ENCODE measurements at regions of chr6 and their contacts with region 1.

Region 1: DNA sequence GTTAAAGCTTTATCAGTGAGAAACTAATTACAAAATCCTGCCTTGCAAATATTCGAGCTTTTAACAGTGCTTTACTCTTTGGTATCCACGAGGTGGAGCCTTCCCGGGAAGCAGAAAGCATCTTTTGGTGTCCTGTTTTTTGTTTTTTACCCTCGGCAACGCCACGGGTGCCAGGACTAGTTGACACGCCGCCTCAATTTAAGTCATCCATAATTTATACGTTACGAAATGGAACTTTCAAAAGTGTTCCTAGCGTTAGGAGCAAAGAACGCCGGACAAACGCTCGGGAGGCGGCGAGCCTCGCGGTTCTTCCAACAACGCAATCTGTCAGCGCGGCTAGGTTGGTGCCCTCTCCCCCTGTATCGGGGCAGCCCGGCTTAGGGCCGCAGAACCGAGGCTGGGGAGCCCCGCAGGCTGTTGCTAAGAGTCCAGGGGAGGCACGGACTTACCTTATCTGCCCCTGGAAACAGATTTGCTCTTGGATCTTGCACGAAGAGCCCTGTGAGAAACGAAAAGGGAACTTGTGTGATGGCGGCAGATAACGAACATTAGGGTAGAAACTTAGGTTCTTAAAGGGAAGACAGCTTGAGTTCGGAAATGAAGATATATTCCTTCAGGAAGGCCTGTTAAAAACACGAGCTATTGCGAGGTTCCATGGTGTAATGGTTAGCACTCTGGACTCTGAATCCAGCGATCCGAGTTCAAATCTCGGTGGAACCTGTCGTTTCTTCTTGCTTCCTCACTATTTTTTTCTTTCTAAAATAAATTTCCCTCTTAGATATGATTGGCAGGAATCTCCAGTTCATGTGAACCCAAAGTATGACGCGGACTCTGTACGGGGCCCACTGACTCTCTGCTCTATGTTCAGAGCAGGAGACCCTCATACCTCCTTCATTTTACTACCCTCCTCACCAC is 46.2 kb upstream of the ZNF184 start:
- DNase-seq: peak; percentile 40
- H3K4me3 Mint-ChIP-seq: peak overlapping the region; percentile 89
- H3K27ac Mint-ChIP-seq: peak overlapping the region; percentile 86
- H3K4me1 Mint-ChIP-seq: peaks cover 16% of the 10 kb centered on the region
- H3K27me3 Mint-ChIP-seq: peaks cover 25% of the 10 kb centered on the region

Region 2: DNA sequence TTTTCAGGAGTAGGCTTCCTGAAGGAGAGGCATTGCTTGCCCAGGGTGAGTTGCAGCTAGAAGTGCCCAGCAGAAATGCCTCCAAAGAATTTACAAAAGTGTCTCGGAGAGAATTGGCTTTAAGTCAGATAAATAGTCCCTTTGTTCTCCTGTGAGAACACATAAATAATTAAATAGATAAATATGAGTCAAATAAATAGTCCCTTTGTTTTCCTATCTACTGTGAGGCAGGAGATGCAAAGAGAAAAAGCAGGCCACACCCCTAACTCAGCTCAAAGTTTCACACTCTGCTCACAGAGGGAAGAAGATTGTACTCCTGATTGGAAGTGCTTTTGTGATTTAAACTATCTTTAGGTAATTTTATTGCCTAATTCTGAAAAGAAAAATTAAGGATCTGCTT is 452.3 kb before region 1 on chr6:
- intact Hi-C with region 1: no loop called
- DNase-seq: no peak
- H3K4me3 Mint-ChIP-seq: no peak overlapping the region
- H3K27ac Mint-ChIP-seq: no peak overlapping the region
- H3K4me1 Mint-ChIP-seq: no peaks in the 10 kb centered on the region
- H3K27me3 Mint-ChIP-seq: peaks cover 9% of the 10 kb centered on the region

Region 3: DNA sequence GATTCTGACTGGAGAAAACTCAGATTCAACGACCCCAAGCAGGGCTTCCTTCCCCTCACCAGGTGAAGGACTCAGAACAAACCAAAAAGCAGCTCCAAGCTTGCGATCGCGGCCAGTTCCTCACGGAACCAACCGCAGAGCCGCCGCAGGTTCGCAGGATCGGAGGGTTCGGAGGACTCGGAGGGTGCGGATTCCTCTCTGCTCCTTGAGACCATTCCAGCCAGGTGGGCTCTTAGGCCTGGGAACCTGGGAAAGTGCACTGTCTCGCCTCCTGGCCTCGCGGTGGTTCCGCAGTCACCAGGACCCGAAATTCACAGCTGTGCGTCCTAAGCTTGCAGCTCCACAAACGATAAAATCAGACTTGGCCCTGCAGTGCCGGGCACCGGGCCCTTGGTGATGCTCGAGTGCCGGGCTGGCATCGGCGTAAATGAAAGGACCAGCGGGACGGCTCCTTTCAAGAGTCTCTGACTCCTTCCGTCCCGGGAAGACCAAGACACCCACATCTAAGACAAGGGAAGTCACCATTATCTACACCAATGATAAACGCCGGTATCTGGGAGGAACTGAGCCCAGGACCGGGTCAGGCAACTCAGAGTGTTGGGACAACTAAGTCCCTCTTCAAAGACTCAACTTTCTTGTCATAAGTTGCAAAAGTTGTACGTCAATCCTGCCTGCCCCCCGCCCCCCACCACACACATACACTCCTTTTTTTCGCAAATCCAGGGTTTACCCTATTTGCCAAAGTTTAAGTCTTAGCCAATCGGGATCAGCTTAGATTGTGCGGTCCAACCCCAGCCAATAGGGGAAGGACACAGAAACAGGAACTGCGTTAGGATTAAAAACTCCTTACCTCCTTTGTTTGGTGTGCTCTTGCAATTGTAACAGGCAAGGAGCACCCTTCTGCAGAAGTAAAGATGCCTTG is 341.4 kb before region 1 on chr6:
- intact Hi-C with region 1: loop called (anchors 2 kb)
- DNase-seq: peak; percentile 66
- H3K4me3 Mint-ChIP-seq: peak overlapping the region; percentile 95
- H3K27ac Mint-ChIP-seq: peak overlapping the region; percentile 93
- H3K4me1 Mint-ChIP-seq: peaks cover 7% of the 10 kb centered on the region
- H3K27me3 Mint-ChIP-seq: peaks cover 36% of the 10 kb centered on the region

Region 4: GRCh38 chr6:27503436-27504030 is 15.6 kb before region 1 on chr6:
- intact Hi-C with region 1: loop called (anchors 1 kb)
- DNase-seq: peak; percentile 60
- H3K4me3 Mint-ChIP-seq: peak overlapping the region; percentile 90
- H3K27ac Mint-ChIP-seq: peak overlapping the region; percentile 82
- H3K4me1 Mint-ChIP-seq: peaks cover 32% of the 10 kb centered on the region
- H3K27me3 Mint-ChIP-seq: peaks cover 42% of the 10 kb centered on the region

Region 5: DNA sequence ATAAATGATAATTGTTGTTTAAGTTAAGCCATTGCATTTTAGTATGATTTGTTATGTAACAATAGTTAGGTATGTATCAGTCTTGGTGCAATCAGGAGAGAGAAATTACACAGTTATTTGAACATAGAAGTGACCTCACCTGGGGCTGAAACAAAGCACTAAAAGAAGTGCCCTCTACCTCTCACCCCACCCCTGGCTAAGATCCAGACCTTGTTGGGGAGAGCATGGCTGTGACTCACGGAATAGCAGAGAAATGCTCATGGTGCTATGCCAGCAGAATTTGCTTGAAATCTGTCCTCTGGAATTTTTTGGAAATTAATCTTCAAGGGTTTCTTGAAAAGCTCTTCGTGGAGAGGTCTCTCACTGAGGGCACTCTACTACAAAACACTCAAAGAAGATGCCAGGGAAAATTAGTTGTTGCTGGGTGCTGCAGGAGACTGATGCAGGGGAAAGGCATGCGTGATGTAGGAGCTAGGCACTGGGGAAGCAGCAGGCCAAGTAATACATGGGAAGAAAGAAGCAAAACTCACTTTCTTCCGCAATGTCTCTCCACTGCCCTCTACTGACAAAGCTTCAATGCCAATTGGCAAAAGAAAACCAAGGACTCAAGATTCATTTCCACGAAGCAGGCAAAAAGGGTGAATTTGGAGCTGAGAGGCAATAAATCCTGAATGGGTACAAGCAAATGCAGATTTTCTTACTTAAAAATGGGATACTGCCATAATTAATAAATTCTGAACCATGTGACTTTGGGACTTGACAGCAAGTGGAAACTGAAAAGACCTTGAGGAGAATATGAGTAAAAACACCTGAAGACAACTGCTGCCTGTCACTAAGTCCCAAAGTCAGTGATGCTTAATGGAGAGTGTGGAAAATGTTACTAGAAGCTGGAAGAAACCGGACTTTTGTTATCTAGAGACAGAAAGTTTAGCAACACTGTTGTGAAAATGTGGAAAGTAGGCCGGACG is 90.1 kb after region 1 on chr6:
- intact Hi-C with region 1: loop called (anchors 1 kb)
- DNase-seq: no peak
- H3K4me3 Mint-ChIP-seq: no peak overlapping the region
- H3K27ac Mint-ChIP-seq: no peak overlapping the region
- H3K4me1 Mint-ChIP-seq: peaks cover 18% of the 10 kb centered on the region
- H3K27me3 Mint-ChIP-seq: peaks cover 28% of the 10 kb centered on the region

Region 6: DNA sequence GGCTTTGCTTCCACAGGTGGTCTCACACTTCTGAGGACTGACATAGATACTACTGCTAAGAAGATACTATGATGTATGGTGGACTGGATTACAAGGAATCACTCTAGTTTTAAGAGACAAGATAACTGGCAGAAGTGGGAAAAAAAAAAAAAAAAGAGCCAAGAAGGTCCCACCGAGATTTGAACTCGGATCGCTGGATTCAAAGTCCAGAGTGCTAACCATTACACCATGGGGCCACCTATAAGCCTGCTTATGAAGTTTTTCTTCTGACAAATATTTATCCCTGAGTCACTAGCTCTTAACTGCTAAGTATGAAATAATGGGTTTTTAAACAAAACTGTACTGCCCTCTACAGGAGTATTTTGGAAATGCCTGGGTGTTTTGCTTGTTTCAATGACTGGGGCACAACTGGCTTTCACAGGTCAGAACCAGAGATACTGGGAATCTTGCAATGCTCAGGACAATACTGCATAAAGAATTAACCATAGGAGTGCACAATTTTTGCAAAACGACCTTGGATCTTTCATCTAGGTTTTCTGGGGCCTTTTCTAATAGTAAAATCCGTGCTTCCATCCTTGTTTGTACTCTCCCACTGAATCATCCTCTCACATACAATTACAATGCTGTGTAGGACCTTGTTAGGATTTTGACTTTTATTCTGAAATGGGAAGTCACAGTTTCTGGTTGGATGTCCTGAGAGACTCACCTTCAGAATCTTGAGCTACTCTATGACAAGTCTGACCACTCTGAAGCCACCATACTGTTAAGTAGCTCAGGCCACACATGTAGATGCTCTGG is 276.8 kb after region 1 on chr6:
- intact Hi-C with region 1: loop called (anchors 1 kb)
- DNase-seq: peak; percentile 58
- H3K4me3 Mint-ChIP-seq: no peak overlapping the region
- H3K27ac Mint-ChIP-seq: peak overlapping the region; percentile 65
- H3K4me1 Mint-ChIP-seq: peaks cover 42% of the 10 kb centered on the region
- H3K27me3 Mint-ChIP-seq: peaks cover 12% of the 10 kb centered on the region

Measured in activated T-helper 1 cell treated with anti-CD3 and anti-CD28 coated beads, Interleukin-12 subunit alpha, Interleukin-12 subunit beta, Interleukin-2, Interleukin-4 antibody, amounts not matched to agents 30 ng/mL and 10 ng/mL and 1 ng/mL, durations not matched to agents 14 hours and 24 hours and 36 hours (primary cell).